ENCODE measurements at regions of chr7 and their contacts with region 1.

Region 1: DNA sequence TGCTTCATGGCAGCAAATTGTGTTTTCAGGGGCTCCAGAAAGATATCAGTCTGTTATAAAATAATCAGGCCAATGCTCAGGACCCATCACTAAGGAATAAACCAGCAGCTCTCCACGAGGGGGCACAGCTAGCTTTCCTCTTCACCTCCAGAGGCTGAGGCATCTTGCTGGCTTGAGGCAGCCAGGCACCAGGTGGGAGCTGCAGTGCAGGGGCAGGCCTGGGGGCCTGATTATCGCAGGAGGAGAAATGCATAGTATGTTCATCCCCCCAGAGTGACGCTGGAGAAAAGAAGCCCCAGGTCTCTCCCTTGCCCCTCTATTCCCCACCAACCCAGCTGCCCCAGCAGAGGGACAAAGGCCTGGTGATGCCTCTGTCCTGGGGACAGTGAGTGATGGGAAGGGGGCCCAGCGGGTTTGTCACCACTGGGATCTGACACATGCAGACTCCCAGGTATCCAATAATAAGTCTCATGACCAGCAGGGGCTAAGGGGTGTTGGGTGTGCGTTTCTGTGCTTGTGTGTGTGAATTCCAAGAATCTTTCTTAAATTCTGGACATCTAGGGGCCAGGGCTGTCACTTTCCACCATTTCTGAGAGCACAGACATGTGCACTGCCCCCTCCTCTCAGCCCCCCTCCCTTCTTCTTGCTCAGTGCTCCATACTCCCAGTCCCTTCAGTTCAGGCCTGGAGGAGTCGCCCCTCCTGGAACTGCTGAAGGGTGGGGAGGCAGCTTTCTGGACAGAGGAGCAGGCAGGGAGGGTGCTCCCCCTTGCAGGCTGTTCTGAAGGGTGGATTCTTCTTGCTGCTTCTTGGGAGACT is 128.1 kb upstream of the FAM20C start:
- DNase-seq: no peak
- H3K4me3 ChIP-seq: no peak overlapping the region
- H3K27ac ChIP-seq: no peak overlapping the region
- H3K4me1 ChIP-seq: peaks cover 0 to 9% (median 4%) of the 10 kb centered on the region in 4 experiments; a peak in 4 of 7 replicates
- H3K27me3 ChIP-seq: no peaks in the 10 kb centered on the region
- CTCF ChIP-seq: peak in 2 of 3 experiments; percentile 61 to 74; a peak in 3 of 4 replicates
- EP300 ChIP-seq: no peak
- POLR2A ChIP-seq: no peak
- RAD21 ChIP-seq: peak; percentile 75 to 79

Region 2: GRCh38 chr7:45106-46090 is 18.9 kb before region 1 on chr7:
- CTCF ChIA-PET with region 1: interaction called, 11 read pairs
- POLR2A ChIA-PET with region 1: no interaction called
- DNase-seq: no peak
- H3K4me3 ChIP-seq: no peak overlapping the region
- H3K27ac ChIP-seq: no peak overlapping the region
- H3K4me1 ChIP-seq: peaks cover 0 to 3% (median under 1%) of the 10 kb centered on the region in 4 experiments; a peak in 3 of 7 replicates
- H3K27me3 ChIP-seq: peaks cover 0 to 2% (median 0%) of the 10 kb centered on the region in 4 experiments; a peak in 1 of 7 replicates
- CTCF ChIP-seq: no peak
- EP300 ChIP-seq: no peak
- POLR2A ChIP-seq: no peak
- RAD21 ChIP-seq: no peak

Region 3: GRCh38 chr7:89232-90019 is 25.1 kb after region 1 on chr7:
- CTCF ChIA-PET with region 1: interaction called, 20 read pairs
- POLR2A ChIA-PET with region 1: interaction called, 6 read pairs
- DNase-seq: peak in 1 of 2 experiments; percentile 43
- H3K4me3 ChIP-seq: no peak overlapping the region
- H3K27ac ChIP-seq: no peak overlapping the region
- H3K4me1 ChIP-seq: peaks cover 11 to 25% (median 15%) of the 10 kb centered on the region in 4 experiments
- H3K27me3 ChIP-seq: peaks cover 0 to 2% (median 0%) of the 10 kb centered on the region in 4 experiments; a peak in 1 of 7 replicates
- CTCF ChIP-seq: no peak
- EP300 ChIP-seq: no peak
- POLR2A ChIP-seq: no peak
- RAD21 ChIP-seq: no peak

Region 4: DNA sequence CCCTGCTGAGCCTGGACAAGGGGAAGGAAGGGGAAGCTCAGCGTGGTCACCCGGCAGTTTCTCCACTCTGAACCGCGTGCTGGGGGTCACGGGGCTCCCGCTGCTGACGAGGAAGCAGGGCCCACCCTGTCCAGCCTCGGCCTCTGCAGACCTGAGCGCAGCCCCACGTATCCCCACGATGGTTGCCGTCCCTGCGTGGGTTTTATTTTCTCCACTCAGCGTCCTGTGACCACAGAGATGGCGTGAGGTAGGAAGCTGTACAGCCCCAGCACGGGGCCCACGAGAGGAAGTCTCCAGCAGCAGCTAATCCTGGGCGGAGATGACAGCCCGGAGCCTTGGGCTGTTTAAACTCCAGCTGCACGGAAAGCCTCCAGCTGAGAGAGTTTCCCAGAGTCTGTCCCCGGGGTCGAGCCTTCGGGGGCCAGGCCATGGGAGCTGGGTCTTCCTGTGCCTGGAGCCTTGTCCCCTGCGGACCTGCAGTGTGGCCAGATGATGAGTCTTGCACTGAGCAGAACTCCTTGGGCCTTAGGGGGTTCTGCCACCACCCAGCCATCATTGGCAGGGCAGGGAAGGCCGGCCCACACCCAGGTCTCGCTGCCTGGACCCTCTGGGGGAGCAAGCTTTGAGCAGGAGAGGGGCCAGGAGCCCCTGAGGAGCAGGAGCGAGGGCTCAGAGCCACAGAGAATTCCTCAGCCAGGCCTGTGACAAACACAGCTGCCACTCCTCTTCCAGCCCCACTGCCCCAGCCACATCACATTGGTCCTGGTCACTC is 55.3 kb after region 1 on chr7:
- CTCF ChIA-PET with region 1: interaction called, 14 read pairs
- POLR2A ChIA-PET with region 1: no interaction called
- DNase-seq: no peak
- H3K4me3 ChIP-seq: no peak overlapping the region
- H3K27ac ChIP-seq: no peak overlapping the region
- H3K4me1 ChIP-seq: peaks cover 3 to 32% (median 17%) of the 10 kb centered on the region in 4 experiments
- H3K27me3 ChIP-seq: peaks cover 0 to 6% (median under 1%) of the 10 kb centered on the region in 4 experiments; a peak in 3 of 7 replicates
- CTCF ChIP-seq: no peak
- EP300 ChIP-seq: no peak
- POLR2A ChIP-seq: no peak
- RAD21 ChIP-seq: no peak

Region 5: GRCh38 chr7:207418-208129 is 143.3 kb after region 1 on chr7:
- CTCF ChIA-PET with region 1: interaction called, 30 read pairs
- POLR2A ChIA-PET with region 1: no interaction called
- DNase-seq: no peak
- H3K4me3 ChIP-seq: no peak overlapping the region
- H3K27ac ChIP-seq: no peak overlapping the region
- H3K4me1 ChIP-seq: peaks cover 0 to 4% (median 0%) of the 10 kb centered on the region in 4 experiments; a peak in 1 of 7 replicates
- H3K27me3 ChIP-seq: no peaks in the 10 kb centered on the region
- CTCF ChIP-seq: peak in 2 of 3 experiments; percentile 54 to 69; a peak in 2 of 4 replicates
- EP300 ChIP-seq: no peak
- POLR2A ChIP-seq: no peak
- RAD21 ChIP-seq: peak; percentile 45 to 66

Region 6: GRCh38 chr7:266851-267840 is 202.8 kb after region 1 on chr7:
- CTCF ChIA-PET with region 1: interaction called, 21 read pairs
- POLR2A ChIA-PET with region 1: no interaction called
- DNase-seq: peak; percentile 19 to 88
- H3K4me3 ChIP-seq: no peak overlapping the region
- H3K27ac ChIP-seq: no peak overlapping the region
- H3K4me1 ChIP-seq: no peaks in the 10 kb centered on the region
- H3K27me3 ChIP-seq: no peaks in the 10 kb centered on the region; a peak in 1 of 7 replicates
- CTCF ChIP-seq: peak in 2 of 3 experiments; percentile 70 to 88; a peak in 3 of 4 replicates
- EP300 ChIP-seq: no peak
- POLR2A ChIP-seq: no peak
- RAD21 ChIP-seq: peak; percentile 80 to 88